ENCODE measurements at regions of chr20 and their contacts with region 1.

Region 1: GRCh38 chr20:31851240-31851955 is 6.0 kb upstream of the FOXS1 start:
- DNase-seq: no peak
- ATAC-seq: no peak
- H3K4me3 ChIP-seq: no peak overlapping the region
- H3K4me3 Mint-ChIP-seq: no peak overlapping the region
- H3K27ac ChIP-seq: no peak overlapping the region
- H3K27ac Mint-ChIP-seq: no peak overlapping the region
- H3K4me1 ChIP-seq: no peaks in the 10 kb centered on the region
- H3K4me1 Mint-ChIP-seq: no peaks in the 10 kb centered on the region
- H3K27me3 ChIP-seq: peaks cover 0 to 24% (median 2%) of the 10 kb centered on the region in 4 experiments
- H3K27me3 Mint-ChIP-seq: peaks cover 23% of the 10 kb centered on the region
- CTCF ChIP-seq: no peak

Region 2: DNA sequence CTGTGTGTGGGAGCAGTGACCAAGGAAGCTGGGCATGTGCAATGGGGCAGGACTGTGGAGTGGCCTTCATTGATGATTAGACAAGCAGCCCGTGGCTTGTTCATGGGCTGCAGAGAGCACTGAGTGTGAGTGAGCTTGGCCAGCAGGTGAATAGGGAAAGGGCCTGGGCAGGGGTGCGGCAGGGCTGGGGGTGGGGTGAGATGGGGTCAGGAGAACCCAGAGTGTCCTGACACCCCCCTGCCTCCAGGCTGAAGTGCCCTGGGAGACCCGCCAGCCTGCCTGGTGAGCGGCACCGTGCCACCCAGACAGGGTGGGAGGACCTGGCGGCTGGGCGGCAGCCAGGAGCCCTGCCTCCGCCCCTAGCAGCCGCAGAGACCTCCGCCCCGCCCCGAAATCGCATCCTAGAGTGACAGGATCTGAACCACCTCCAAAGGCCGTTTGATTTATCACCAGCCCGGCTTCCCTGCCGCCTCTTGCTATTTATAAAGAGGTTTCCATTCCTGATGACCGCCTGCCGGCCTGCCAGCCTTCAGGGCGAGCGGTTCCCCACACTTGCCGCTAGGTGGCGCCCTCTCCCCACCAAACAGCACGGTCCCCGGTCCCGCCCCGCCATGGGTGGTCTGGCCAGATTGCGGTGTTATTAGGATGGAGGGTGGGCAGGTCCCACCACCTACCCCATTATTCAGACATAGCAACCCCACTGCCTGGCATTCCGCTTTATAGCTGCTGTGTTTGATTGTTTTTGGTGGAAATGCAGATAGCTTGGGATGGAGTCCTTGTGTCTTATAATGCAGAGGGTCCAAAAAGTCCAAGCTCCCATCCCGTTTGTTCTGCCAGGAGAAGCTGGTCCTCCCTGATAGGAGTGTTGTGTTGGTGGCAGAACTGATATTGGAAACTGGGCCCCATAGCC is 28.7 kb before region 1 on chr20:
- CTCF ChIA-PET with region 1: interaction called, 37 read pairs
- POLR2A ChIA-PET with region 1: no interaction called
- intact Hi-C with region 1: loop called (anchors 1 kb)
- DNase-seq: peak; percentile 82
- ATAC-seq: peak; percentile 93
- H3K4me3 ChIP-seq: no peak overlapping the region
- H3K4me3 Mint-ChIP-seq: peak overlapping the region; percentile 27
- H3K27ac ChIP-seq: no peak overlapping the region
- H3K27ac Mint-ChIP-seq: no peak overlapping the region
- H3K4me1 ChIP-seq: peaks cover 6 to 8% of the 10 kb centered on the region in 2 donors
- H3K4me1 Mint-ChIP-seq: peaks cover 8% of the 10 kb centered on the region
- H3K27me3 ChIP-seq: peaks cover 0 to 9% (median 0%) of the 10 kb centered on the region in 4 experiments
- H3K27me3 Mint-ChIP-seq: peaks cover 8% of the 10 kb centered on the region
- CTCF ChIP-seq: peak; percentile 99

Region 3: DNA sequence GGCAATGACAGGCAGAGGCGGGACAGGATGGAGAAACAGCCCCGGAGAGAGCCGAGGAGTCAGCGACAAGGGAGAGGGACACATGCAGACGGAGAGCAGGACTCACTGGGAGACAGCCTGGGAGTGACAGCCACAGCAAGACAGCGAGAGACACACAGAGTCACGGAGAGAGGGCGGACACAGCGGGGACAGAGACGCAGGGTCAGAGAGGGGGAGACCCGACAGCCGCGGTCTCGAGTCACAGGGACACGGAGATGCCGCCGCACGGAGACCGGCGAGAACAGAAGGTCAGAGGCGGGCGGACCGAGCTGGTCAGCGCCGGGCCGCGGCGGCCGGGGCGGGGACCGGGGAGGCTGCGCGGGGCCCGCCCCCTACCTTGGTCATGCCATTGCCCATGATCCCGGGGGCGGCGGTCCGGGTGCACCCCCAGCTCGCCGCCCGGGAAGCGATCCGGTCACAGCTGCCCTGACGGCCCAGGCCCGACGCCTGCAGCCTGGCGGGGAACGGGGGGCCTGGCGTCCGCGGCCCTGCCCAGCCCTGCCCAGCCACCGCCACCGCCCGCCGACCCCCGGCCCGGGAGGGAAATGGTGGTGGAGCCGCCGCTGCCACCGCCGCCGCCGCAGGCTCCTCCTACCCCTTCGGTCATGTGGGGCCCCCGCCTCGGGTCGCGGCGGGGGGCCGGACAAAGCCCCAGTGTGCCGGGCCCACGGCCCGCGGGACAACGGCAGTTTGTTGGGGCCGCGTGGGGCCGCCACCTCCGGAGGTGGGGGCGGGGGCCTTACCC is 18.7 kb after region 1 on chr20 and contains the starts of genes DUSP15 and TTLL9:
- CTCF ChIA-PET with region 1: interaction called, 20 read pairs
- POLR2A ChIA-PET with region 1: no interaction called
- intact Hi-C with region 1: no loop called
- DNase-seq: peak; percentile 51
- ATAC-seq: peak; percentile 55
- H3K4me3 ChIP-seq: peak within 1 kb of the TSS in 4 of 5 experiments; percentile 30 to 68 (median 56)
- H3K4me3 Mint-ChIP-seq: peak within 1 kb of the TSS; percentile 94
- H3K27ac ChIP-seq: peak within 1 kb of the TSS in 1 of 2 donors; percentile 30
- H3K27ac Mint-ChIP-seq: peak within 1 kb of the TSS; percentile 81
- H3K4me1 ChIP-seq: peaks cover 29 to 31% of the 10 kb centered on the region in 2 donors
- H3K4me1 Mint-ChIP-seq: peaks cover 28% of the 10 kb centered on the region
- H3K27me3 ChIP-seq: peaks cover 0 to 30% (median 12%) of the 10 kb centered on the region in 4 experiments
- H3K27me3 Mint-ChIP-seq: peaks cover 18% of the 10 kb centered on the region
- CTCF ChIP-seq: no peak
- total RNA-seq, gene DUSP15: 1.8 and 3.3 TPM in 2 replicates
- total RNA-seq, gene TTLL9: 0.74 and 1.2 TPM in 2 replicates

Region 4: DNA sequence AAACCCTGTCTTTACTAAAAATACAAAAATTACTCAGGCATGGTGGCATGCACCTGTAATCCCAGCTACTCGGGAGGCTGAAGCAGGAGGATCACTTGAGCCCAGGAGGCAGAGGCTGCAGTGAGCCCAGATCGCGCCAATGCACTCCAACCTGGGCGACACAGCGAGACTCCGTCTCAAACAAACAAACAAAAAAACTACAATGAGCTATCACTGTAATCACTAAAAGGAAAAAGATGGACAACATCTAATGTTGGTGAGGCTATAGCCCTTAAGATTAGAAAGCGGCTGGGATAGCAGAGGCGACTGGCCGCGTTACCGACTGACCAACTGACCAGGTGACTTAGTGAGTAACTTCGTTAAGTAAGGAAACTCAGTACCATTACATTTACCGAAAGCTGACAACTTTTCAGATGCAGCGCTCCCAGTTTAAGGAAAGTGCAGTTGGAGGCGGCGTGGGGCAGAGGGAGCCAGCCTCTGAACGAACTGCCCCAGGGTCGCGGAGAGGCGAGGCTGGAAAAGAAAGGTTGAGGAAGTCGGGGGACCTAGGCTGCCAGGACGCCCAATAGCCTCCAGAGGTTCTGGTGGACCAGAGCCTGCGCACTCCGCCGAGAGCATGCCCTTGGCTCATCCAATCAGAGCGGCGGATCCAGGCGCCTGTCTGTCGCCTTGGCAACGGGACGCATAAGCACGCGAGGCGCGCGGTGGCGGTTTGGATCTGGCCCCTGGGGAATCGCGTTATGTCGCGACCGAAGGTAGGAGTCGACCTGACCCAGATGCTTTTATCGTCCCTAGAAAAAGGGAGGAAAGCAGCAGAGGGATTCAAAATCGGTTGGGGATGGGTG is 28.0 kb after region 1 on chr20:
- CTCF ChIA-PET with region 1: interaction called, 24 read pairs
- POLR2A ChIA-PET with region 1: no interaction called
- intact Hi-C with region 1: loop called (anchors 2 kb)
- DNase-seq: peak; percentile 92
- ATAC-seq: peak; percentile 89
- H3K4me3 ChIP-seq: peak overlapping the region; percentile 62 to 75 (median 66)
- H3K4me3 Mint-ChIP-seq: peak overlapping the region; percentile 97
- H3K27ac ChIP-seq: peak overlapping the region in 1 of 2 donors; percentile 71
- H3K27ac Mint-ChIP-seq: peak overlapping the region; percentile 97
- H3K4me1 ChIP-seq: peaks cover 8 to 11% of the 10 kb centered on the region in 2 donors
- H3K4me1 Mint-ChIP-seq: peaks cover 13% of the 10 kb centered on the region
- H3K27me3 ChIP-seq: no peaks in the 10 kb centered on the region
- H3K27me3 Mint-ChIP-seq: no peaks in the 10 kb centered on the region
- CTCF ChIP-seq: no peak

Region 5: GRCh38 chr20:31956556-31957526 is 105.4 kb after region 1 on chr20:
- CTCF ChIA-PET with region 1: interaction called, 187 read pairs
- POLR2A ChIA-PET with region 1: interaction called, 5 read pairs
- intact Hi-C with region 1: loop called (anchors 1 kb)
- DNase-seq: no peak
- ATAC-seq: no peak
- H3K4me3 ChIP-seq: no peak overlapping the region
- H3K4me3 Mint-ChIP-seq: no peak overlapping the region
- H3K27ac ChIP-seq: no peak overlapping the region
- H3K27ac Mint-ChIP-seq: no peak overlapping the region
- H3K4me1 ChIP-seq: no peaks in the 10 kb centered on the region
- H3K4me1 Mint-ChIP-seq: peaks cover 3% of the 10 kb centered on the region
- H3K27me3 ChIP-seq: peaks cover 0 to 8% (median 2%) of the 10 kb centered on the region in 4 experiments
- H3K27me3 Mint-ChIP-seq: peaks cover 37% of the 10 kb centered on the region
- CTCF ChIP-seq: no peak

Region 6: DNA sequence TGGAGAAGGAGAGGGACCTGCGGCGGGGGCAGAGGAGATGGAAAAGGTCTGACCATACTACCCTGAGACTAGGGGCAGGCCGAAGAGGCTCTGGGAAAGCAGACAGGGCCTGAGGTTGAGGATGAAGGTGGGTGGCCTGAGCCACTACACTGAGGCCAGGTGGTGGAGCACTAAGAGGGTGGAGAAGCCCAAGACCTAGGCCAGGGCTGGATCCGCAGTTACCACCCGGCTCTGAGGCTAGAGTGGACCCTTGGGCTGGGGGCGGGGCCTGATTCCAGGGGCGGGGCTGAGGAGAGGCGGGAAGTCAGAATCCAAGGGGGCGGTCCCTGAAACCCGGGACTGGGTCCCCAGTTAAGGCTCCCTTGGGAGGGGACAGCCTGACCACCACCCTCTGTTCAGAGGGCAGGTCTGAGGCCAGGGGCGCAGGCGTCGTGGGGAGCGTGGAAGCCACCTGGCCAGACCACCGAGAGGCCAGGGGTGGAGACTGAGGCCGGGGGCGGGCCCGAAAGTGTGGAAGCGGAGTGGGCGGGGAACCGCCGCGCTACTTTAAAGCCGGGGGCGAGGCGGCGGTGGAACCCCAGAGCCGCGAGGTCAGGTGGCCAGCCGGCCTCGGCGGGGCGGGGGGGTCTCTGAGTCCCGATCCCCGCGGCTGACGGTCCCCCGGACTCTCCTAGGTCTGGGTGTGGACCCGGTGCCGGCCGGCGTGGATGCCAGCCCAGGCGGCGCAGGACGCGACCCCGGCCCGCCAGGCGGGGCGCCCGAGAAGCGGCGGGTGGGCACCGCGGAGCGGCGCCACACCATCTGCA is 167.1 kb after region 1 on chr20:
- CTCF ChIA-PET with region 1: interaction called, 9 read pairs
- POLR2A ChIA-PET with region 1: no interaction called
- intact Hi-C with region 1: loop called (anchors 5 kb)
- DNase-seq: peak; percentile 60
- ATAC-seq: peak; percentile 61
- H3K4me3 ChIP-seq: peak overlapping the region in 4 of 5 experiments; percentile 41 to 69 (median 56)
- H3K4me3 Mint-ChIP-seq: peak overlapping the region; percentile 84
- H3K27ac ChIP-seq: no peak overlapping the region
- H3K27ac Mint-ChIP-seq: no peak overlapping the region
- H3K4me1 ChIP-seq: peaks cover 15 to 17% of the 10 kb centered on the region in 2 donors
- H3K4me1 Mint-ChIP-seq: peaks cover 22% of the 10 kb centered on the region
- H3K27me3 ChIP-seq: peaks cover 0 to 64% (median 30%) of the 10 kb centered on the region in 4 experiments
- H3K27me3 Mint-ChIP-seq: peaks cover 75% of the 10 kb centered on the region
- CTCF ChIP-seq: no peak

Region 7: DNA sequence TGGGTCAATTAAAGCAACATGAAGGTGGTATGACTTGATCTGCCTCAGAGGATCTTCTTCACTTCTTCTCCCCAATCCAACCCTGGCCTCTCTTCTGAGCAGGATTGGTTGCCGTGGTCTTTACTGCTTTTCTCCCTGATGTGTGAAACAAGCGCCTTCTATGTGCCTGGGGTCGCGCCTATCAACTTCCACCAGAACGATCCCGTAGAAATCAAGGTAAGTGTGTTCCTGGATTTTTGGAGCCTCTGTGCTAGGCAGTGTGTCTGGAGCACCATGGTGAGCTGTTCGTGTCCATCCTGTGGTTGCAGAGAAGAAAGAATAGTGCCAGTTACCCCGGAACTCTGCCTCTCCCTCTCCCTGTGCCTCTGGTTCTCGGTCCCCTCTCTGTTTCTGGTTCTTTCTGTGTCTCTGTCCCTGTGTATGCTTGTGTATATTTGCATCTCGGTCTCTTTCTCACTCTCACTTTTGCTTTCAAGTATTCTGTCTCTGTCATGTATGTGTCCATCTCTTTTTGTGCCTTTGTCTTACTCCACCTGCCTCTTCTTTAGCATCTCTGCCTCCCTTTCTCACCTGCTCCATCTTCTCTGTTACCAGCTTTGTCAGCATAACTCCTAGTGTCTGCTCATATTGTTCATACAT is 281.6 kb after region 1 on chr20:
- CTCF ChIA-PET with region 1: no interaction called
- POLR2A ChIA-PET with region 1: no interaction called
- intact Hi-C with region 1: no loop called
- DNase-seq: no peak
- ATAC-seq: no peak
- H3K4me3 ChIP-seq: no peak overlapping the region
- H3K4me3 Mint-ChIP-seq: no peak overlapping the region
- H3K27ac ChIP-seq: no peak overlapping the region
- H3K27ac Mint-ChIP-seq: no peak overlapping the region
- H3K4me1 ChIP-seq: no peaks in the 10 kb centered on the region
- H3K4me1 Mint-ChIP-seq: peaks cover 11% of the 10 kb centered on the region
- H3K27me3 ChIP-seq: no peaks in the 10 kb centered on the region
- H3K27me3 Mint-ChIP-seq: no peaks in the 10 kb centered on the region
- CTCF ChIP-seq: no peak

Region 8: DNA sequence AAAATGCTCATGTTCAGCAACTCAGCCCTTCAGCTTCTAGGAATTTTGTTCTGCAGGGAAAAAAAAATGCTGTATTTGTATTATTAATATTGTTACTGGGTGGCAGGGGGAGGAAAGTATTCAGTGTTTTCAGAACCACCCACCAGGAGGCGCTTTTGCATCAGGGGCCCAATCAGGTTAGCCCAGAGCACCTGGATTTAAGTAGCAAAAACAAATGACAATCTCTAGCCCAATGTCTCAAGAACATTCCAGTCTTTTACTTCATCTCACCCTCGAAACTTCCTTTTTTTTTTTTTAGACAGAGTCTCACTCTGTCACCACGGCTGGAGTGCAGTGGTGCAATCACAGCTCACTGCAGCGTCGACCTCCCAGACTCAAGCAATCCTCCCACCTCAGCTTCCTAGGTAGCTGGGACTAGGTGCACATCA is 823.0 kb after region 1 on chr20:
- CTCF ChIA-PET with region 1: no interaction called
- POLR2A ChIA-PET with region 1: no interaction called
- intact Hi-C with region 1: no loop called
- DNase-seq: peak; percentile 58
- ATAC-seq: no peak
- H3K4me3 ChIP-seq: no peak overlapping the region
- H3K4me3 Mint-ChIP-seq: peak overlapping the region; percentile 0
- H3K27ac ChIP-seq: no peak overlapping the region
- H3K27ac Mint-ChIP-seq: no peak overlapping the region
- H3K4me1 ChIP-seq: peaks cover 23 to 26% of the 10 kb centered on the region in 2 donors
- H3K4me1 Mint-ChIP-seq: peaks cover 36% of the 10 kb centered on the region
- H3K27me3 ChIP-seq: no peaks in the 10 kb centered on the region
- H3K27me3 Mint-ChIP-seq: no peaks in the 10 kb centered on the region
- CTCF ChIP-seq: peak; percentile 72

Measured in B cell (primary cell).